Activated CD4-positive, alpha-beta memory T cell treated with anti-CD3 and anti-CD28 coated beads, Interleukin-2, amount 10 ng/mL, durations not matched to agents 7 days and 5 days (primary cell): ENCODE measurements at regions of chr5 and their contacts with region 1.

Region 1: DNA sequence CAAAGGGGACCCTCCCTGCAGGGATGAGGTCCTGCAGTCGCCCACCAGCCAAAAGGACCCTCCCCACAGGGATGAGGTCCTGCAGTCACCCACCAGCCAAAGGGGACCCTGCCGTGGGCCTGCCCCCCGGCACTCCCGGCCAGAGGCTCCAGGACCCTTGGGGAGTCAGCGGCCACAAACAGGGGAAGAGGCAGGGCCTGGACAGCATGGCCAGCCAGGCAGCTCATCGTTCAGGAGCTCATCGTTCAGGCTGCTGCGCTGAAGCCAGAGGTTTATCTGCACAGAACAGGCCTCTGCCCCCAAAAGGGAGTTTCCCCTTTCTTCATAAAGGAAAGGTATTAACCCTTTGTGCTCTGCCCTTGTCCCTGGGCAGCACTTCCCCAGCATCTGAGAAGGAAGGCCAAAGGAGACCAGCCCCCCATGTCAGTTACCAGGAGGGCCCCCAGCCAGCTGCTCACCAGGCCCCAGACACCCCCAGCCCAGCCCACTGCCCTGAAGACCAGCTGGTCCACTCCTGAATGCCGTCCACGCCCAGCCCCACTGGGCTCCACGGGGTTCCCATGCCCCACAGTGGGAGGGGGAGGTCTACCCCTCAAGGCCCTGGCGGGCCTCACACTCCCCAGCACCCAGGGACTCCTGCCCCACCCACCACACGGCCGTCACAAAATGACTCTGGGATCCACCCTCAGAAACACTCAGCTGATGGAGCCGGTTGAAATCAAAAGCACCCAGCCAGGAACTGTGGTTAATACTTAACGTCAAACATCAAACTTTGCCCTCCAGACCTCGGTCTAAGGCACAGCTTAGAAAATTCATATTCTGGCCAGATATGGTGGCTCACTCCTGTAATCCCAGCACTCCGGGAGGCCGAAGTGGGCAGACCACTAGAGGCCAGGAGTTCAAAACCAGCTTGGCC is 6.3 kb downstream of the SLC12A7 start:
- DNase-seq: peak; percentile 70
- H3K4me3 Mint-ChIP-seq: peak overlapping the region; percentile 57
- H3K27ac Mint-ChIP-seq: peak overlapping the region; percentile 94
- H3K4me1 Mint-ChIP-seq: peaks cover 56% of the 10 kb centered on the region
- H3K27me3 Mint-ChIP-seq: no peaks in the 10 kb centered on the region

Region 2: DNA sequence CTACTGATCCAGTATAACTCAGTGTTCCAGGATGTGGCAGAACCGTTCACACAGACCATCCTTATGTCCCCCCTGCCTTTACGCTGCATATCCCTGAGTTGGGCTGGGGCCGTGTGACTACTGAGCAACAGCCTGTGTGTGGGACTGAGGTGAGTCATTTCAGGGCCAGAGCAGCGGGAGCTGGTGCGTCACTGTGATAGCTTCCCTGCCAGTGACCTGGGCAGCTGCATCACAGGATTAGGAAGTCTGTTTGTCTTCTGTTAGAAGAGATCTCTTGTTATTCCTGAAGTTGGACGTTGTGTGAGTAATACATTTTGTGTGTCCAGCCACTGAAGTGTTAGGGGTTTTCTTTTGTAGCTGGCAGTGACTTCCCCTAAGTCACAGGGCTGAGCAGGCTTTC is 448.0 kb before region 1 on chr5:
- CTCF ChIA-PET with region 1: no interaction called
- POLR2A ChIA-PET with region 1: no interaction called
- DNase-seq: no peak
- H3K4me3 Mint-ChIP-seq: no peak overlapping the region
- H3K27ac Mint-ChIP-seq: no peak overlapping the region
- H3K4me1 Mint-ChIP-seq: no peaks in the 10 kb centered on the region
- H3K27me3 Mint-ChIP-seq: no peaks in the 10 kb centered on the region

Region 3: DNA sequence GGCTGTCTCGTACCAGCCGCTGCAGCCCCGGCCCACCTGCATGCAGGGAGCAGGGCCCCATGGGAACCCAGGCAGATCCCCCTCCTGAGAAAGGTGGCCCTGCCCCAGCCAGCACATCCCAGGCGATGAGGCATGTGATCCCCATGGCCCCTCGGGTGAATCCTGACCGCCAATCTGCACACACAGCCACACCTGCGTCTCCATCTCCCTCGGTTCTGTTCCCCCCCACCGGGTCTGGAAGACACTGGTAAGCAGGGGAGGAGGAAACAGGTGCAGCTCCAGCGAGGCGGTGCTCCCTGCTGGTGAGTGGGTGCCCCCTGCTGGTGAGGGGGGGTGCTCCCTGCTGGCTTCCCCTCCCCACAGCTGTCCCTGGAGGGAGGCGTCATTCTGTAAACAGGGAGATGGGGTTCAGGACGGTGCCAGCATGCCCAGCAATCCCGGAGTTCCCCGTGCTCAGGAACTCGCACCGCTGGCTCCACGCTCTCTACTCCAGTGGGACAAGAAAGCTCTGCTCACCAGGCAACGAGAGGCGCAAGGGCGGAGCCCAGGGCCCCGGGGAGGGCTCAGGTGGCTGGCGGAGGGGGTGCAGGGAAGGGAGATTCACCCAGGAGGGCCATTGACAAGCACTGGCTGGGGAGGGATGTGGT is 34.7 kb after region 1 on chr5:
- CTCF ChIA-PET with region 1: interaction called, 10 read pairs
- POLR2A ChIA-PET with region 1: no interaction called
- DNase-seq: peak; percentile 81
- H3K4me3 Mint-ChIP-seq: no peak overlapping the region
- H3K27ac Mint-ChIP-seq: no peak overlapping the region
- H3K4me1 Mint-ChIP-seq: peaks cover 3% of the 10 kb centered on the region
- H3K27me3 Mint-ChIP-seq: peaks cover 2% of the 10 kb centered on the region

Region 4: GRCh38 chr5:1208743-1209506 is 103.3 kb after region 1 on chr5:
- CTCF ChIA-PET with region 1: no interaction called
- POLR2A ChIA-PET with region 1: no interaction called
- DNase-seq: no peak
- H3K4me3 Mint-ChIP-seq: no peak overlapping the region
- H3K27ac Mint-ChIP-seq: no peak overlapping the region
- H3K4me1 Mint-ChIP-seq: no peaks in the 10 kb centered on the region
- H3K27me3 Mint-ChIP-seq: peaks cover 2% of the 10 kb centered on the region